Endothelial cell of umbilical vein (primary cell): ENCODE measurements at regions of chr5 and their contacts with region 1.

Region 1: DNA sequence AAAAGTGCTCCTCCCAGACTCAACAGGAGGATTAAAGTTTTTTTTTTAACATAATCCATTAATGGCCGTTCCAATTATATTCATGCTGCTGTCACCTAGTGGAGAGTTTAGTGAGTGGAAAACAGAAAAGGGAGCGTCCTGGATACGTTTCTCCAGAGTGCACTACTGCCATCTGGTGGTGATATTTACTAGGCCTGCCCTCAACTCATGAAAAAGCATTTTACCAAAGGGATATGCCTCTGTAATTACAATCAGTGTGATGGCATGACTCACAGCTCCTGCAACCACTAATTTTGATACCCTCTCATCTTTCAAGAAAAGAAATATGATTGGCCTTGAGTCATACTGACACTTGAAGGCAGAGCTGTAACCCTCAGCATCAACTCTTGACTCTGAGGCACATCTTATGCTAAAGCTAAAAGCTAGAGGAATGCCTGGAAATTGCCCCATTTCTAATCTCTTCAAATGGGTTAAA is 20.0 kb downstream of the MINAR2 start:
- DNase-seq: peak; percentile 87
- H3K4me3 ChIP-seq: no peak overlapping the region
- H3K27ac ChIP-seq: no peak overlapping the region
- H3K4me1 ChIP-seq: no peaks in the 10 kb centered on the region
- H3K27me3 ChIP-seq: peaks cover 1 to 5% of the 10 kb centered on the region in 2 experiments
- CTCF ChIP-seq: peak; percentile 86 to 96
- POLR2A ChIP-seq: no peak

Region 2: GRCh38 chr5:128213340-128213739 is 1554.6 kb before region 1 on chr5:
- CTCF ChIA-PET with region 1: interaction called, 3 read pairs
- POLR2A ChIA-PET with region 1: no interaction called
- dilution Hi-C with region 1: no loop called
- intact Hi-C with region 1: loop called (anchors 1 kb)
- DNase-seq: peak; percentile 68
- H3K4me3 ChIP-seq: no peak overlapping the region
- H3K27ac ChIP-seq: no peak overlapping the region
- H3K4me1 ChIP-seq: no peaks in the 10 kb centered on the region
- H3K27me3 ChIP-seq: no peaks in the 10 kb centered on the region
- CTCF ChIP-seq: peak; percentile 63 to 73
- POLR2A ChIP-seq: no peak

Region 3: DNA sequence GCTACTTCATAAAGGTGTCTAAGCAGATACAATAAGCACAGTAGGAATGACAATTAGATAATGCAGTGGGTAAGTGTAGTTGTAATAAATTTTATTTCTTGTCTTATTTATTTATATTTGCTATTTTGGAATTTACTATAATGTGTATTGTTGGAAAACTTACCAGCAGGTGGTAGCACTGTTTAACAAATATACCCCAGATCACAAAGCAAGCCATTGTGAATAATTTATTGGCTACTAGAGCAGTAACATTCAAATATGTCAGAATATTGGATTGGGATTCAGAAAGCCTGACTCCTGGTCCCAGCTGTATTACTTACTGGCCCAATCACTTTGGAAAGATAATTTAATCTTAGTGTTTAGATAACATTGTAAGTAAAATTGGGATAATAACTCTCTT is 595.4 kb before region 1 on chr5:
- CTCF ChIA-PET with region 1: no interaction called
- POLR2A ChIA-PET with region 1: no interaction called
- dilution Hi-C with region 1: no loop called
- intact Hi-C with region 1: loop called (anchors 5 kb)
- DNase-seq: peak; percentile 11
- H3K4me3 ChIP-seq: no peak overlapping the region
- H3K27ac ChIP-seq: no peak overlapping the region
- H3K4me1 ChIP-seq: no peaks in the 10 kb centered on the region
- H3K27me3 ChIP-seq: no peaks in the 10 kb centered on the region
- CTCF ChIP-seq: no peak
- POLR2A ChIP-seq: no peak

Region 4: DNA sequence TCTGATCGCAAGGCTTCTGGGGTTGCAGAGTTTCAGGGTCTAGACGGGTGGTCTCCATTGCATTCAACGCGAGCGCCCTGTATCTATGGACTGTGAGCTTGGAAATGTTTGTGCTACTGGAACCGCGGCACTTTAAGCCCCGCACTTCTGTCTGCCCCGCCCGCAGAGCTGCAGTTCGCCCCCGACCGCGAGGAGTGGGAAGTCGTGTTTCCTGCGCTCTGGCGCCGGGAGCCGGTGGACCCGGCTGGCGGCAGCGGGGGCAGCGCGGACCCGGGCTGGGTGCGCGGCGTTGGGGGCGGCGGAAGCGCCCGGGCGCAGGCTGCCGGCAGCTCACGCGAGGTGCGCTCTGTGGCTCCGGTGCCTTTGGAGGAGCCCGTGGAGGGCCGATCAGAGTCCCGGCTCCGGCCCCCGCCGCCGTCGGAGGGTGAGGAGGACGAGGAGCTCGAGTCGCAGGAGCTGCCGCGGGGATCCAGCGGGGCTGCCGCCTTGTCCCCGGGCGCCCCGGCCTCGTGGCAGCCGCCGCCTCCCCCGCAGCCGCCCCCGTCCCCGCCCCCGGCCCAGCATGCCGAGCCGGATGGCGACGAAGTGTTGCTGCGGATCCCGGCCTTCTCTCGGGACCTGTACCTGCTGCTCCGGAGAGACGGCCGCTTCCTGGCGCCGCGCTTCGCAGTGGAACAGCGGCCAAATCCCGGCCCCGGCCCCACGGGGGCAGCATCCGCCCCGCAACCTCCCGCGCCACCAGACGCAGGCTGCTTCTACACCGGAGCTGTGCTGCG is 306.8 kb before region 1 on chr5:
- CTCF ChIA-PET with region 1: interaction called, 3 read pairs
- POLR2A ChIA-PET with region 1: no interaction called
- dilution Hi-C with region 1: no loop called
- intact Hi-C with region 1: loop called (anchors 2 kb)
- DNase-seq: peak; percentile 10
- H3K4me3 ChIP-seq: peak overlapping the region; percentile 21 to 41 (median 22)
- H3K27ac ChIP-seq: no peak overlapping the region
- H3K4me1 ChIP-seq: peaks cover 10% of the 10 kb centered on the region
- H3K27me3 ChIP-seq: peaks cover 32 to 54% of the 10 kb centered on the region in 2 experiments
- CTCF ChIP-seq: peak; percentile 14 to 42
- POLR2A ChIP-seq: no peak

Region 5: GRCh38 chr5:129747572-129748407 is 20.2 kb before region 1 on chr5 and contains the start of gene MINAR2:
- CTCF ChIA-PET with region 1: interaction called, 10 read pairs
- POLR2A ChIA-PET with region 1: no interaction called
- dilution Hi-C with region 1: no loop called
- intact Hi-C with region 1: no loop called
- DNase-seq: no peak
- H3K4me3 ChIP-seq: no peak within 1 kb of the TSS
- H3K27ac ChIP-seq: no peak within 1 kb of the TSS
- H3K4me1 ChIP-seq: no peaks in the 10 kb centered on the region
- H3K27me3 ChIP-seq: no peaks in the 10 kb centered on the region
- CTCF ChIP-seq: no peak
- POLR2A ChIP-seq: no peak
- total RNA-seq, gene MINAR2: not detected in 2 replicates

Region 6: DNA sequence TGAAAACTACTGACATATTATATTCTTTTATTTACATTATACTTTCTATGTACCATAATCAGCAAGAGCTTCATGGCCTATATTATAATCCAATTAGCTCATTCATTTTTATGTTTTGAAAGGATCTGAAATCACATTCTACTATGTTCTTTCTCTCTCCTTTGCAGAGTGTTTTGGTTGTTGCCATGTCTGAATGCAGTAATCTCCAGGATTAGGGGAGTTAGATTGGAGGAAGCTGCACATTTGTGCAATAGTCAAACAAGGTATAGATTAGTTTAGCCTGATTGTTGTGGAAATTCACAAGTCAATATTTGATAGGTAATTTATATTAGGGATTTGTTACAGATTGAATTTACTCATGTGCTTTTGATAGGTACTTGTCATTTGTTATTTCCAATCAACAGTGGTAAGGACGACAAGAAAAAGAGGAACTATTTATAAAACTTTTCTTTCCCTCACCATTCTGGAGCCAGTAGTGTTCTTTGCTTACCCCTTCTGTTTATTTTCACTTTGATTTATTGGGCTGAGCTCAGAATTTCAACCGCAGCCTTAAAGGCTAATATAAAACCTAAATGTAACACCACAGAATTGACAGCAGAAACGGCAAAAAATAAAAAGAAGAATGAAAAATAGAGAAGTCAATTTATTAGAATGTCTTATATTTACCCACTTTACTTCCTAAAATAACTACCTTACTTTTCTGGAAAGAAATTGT is 733.4 kb after region 1 on chr5:
- CTCF ChIA-PET with region 1: no interaction called
- POLR2A ChIA-PET with region 1: no interaction called
- dilution Hi-C with region 1: no loop called
- intact Hi-C with region 1: no loop called
- DNase-seq: no peak
- H3K4me3 ChIP-seq: no peak overlapping the region
- H3K27ac ChIP-seq: no peak overlapping the region
- H3K4me1 ChIP-seq: no peaks in the 10 kb centered on the region
- H3K27me3 ChIP-seq: no peaks in the 10 kb centered on the region
- CTCF ChIP-seq: no peak
- POLR2A ChIP-seq: no peak

Region 7: DNA sequence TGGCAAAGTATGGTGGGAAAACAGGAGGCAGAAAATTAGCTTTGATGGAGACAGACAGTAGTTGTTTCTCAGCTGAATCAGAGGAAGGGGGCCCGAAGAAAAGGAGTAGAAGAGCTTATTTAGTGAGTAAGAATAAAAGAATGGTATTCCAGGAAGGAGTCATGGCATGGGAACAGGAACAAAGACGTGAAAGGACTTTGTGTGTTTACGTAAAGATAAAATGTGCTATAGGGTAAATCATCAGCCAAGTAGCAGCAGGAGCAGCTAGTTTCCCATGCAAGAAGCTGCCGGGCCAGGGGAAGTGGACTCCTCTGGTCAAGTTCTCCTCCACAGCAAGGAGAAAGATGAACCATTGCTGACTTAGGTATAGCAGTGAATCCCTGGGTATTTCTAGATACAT is 942.7 kb after region 1 on chr5:
- CTCF ChIA-PET with region 1: no interaction called
- POLR2A ChIA-PET with region 1: no interaction called
- dilution Hi-C with region 1: no loop called
- intact Hi-C with region 1: loop called (anchors 5 kb)
- DNase-seq: peak; percentile 86
- H3K4me3 ChIP-seq: no peak overlapping the region
- H3K27ac ChIP-seq: peak overlapping the region; percentile 48
- H3K4me1 ChIP-seq: peaks cover 26% of the 10 kb centered on the region
- H3K27me3 ChIP-seq: no peaks in the 10 kb centered on the region
- CTCF ChIP-seq: no peak
- POLR2A ChIP-seq: no peak